Ovary (tissue), 10 donors: ENCODE measurements at regions of chr17 and their contacts with region 1.

Region 1: GRCh38 chr17:80477647-80478478 is 1.5 kb upstream of the NPTX1 start:
- DNase-seq: peak; percentile 39 to 77 (median 60)
- H3K4me3 ChIP-seq: no peak overlapping the region
- H3K27ac ChIP-seq: no peak overlapping the region
- H3K4me1 ChIP-seq: peaks cover 3% of the 10 kb centered on the region
- H3K27me3 ChIP-seq: peaks cover 23% of the 10 kb centered on the region
- CTCF ChIP-seq: peak; percentile 10 to 59 (median 38)
- EP300 ChIP-seq: no peak
- POLR2A ChIP-seq: no peak

Region 2: GRCh38 chr17:80855948-80856862 is 378.3 kb after region 1 on chr17:
- intact Hi-C with region 1: loop called in 1 of 4 experiments (anchors 5 kb)
- DNase-seq: no peak
- H3K4me3 ChIP-seq: no peak overlapping the region
- H3K27ac ChIP-seq: no peak overlapping the region
- H3K4me1 ChIP-seq: peaks cover 18% of the 10 kb centered on the region
- H3K27me3 ChIP-seq: no peaks in the 10 kb centered on the region
- CTCF ChIP-seq: no peak
- EP300 ChIP-seq: no peak
- POLR2A ChIP-seq: no peak